ENCODE measurements at regions of chr5 and their contacts with region 1.

Region 1: GRCh38 chr5:98773464-98774191 is at the start of gene RGMB:
- DNase-seq: peak; percentile 99
- ATAC-seq: peak; percentile 83
- H3K4me3 Mint-ChIP-seq: peak within 1 kb of the TSS; percentile 96
- H3K27ac Mint-ChIP-seq: peak within 1 kb of the TSS; percentile 97
- H3K4me1 Mint-ChIP-seq: peaks cover 50% of the 10 kb centered on the region
- H3K27me3 Mint-ChIP-seq: peaks cover 9% of the 10 kb centered on the region
- CTCF ChIP-seq: no peak
- total RNA-seq, gene RGMB: 33.0 to 40.7 TPM (median 40.0 TPM) in 3 replicates

Region 2: GRCh38 chr5:98796197-98796972 is 22.8 kb after region 1 on chr5:
- CTCF ChIA-PET with region 1: interaction called, 57 read pairs
- POLR2A ChIA-PET with region 1: interaction called, 3 read pairs
- DNase-seq: peak; percentile 56
- ATAC-seq: peak; percentile 77
- H3K4me3 Mint-ChIP-seq: no peak overlapping the region
- H3K27ac Mint-ChIP-seq: peak overlapping the region; percentile 86
- H3K4me1 Mint-ChIP-seq: peaks cover 35% of the 10 kb centered on the region
- H3K27me3 Mint-ChIP-seq: no peaks in the 10 kb centered on the region
- CTCF ChIP-seq: peak; percentile 45

Region 3: GRCh38 chr5:98989727-98990126 is 216.1 kb after region 1 on chr5:
- CTCF ChIA-PET with region 1: no interaction called
- POLR2A ChIA-PET with region 1: no interaction called
- DNase-seq: no peak
- ATAC-seq: no peak
- H3K4me3 Mint-ChIP-seq: no peak overlapping the region
- H3K27ac Mint-ChIP-seq: no peak overlapping the region
- H3K4me1 Mint-ChIP-seq: no peaks in the 10 kb centered on the region
- H3K27me3 Mint-ChIP-seq: no peaks in the 10 kb centered on the region
- CTCF ChIP-seq: no peak

Measured in WTC11 (cell line).